Activated B cell treated with CpG ODN at 0.5 μM for 24 hours (primary cell): ENCODE measurements at regions of chr5 and their contacts with region 1.

Region 1: DNA sequence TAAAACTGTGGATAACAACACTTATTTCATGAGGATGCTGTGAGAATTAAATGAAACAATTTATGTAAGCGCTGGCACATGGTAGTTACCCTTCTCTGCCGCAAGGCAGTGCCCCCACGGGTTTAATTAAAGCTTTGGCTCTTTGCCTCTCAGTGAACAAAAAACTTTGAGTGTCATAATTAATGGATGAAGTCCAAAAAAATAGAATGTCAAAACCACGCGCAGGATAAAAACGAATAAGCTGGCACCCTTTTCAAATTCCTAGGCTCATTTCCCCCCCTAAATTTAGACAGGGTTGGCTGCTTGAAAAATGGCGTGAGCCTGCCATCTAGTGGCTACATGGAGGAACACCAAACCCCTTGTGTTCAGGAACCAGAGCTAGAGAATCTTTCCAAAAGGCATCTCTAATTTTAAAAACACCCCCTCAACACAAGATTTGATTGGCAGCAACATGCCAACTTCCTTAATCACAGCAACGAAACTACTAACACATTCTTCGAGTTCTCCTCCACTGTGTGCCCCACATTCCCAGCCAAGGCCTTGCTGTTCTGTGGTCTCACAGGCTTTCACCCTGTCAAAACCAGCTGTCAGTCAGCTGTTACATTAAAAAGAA is 29.0 kb upstream of the CCNG1 start:
- DNase-seq: no peak
- ATAC-seq: peak; percentile 88
- H3K4me3 Mint-ChIP-seq: no peak overlapping the region
- H3K27ac Mint-ChIP-seq: no peak overlapping the region
- H3K4me1 Mint-ChIP-seq: peaks cover 3% of the 10 kb centered on the region
- H3K27me3 Mint-ChIP-seq: peaks cover 9% of the 10 kb centered on the region
- CTCF ChIP-seq: peak; percentile 96

Region 2: DNA sequence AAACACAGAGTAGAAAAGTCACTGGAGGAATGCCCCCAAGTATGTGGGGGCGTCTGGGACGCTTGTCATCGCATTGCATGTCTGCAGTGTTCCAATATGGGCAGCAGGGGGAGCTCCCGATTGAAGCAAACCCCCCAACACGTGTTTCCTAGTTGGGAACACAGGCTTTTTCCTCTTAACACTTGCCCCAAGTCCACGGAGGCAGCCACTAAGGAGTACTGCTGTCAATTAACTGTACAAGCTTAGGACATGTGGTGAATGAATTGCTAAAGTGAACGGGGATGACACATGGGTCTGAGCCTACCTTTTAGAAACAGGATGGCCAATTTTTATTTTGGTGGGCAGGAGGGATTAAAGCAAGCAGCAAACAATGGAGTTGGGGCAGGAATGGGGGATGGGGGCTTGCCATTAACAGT is 1864.1 kb before region 1 on chr5:
- CTCF ChIA-PET with region 1: interaction called, 10 read pairs
- POLR2A ChIA-PET with region 1: no interaction called
- intact Hi-C with region 1: loop called (anchors 1 kb)
- DNase-seq: no peak
- ATAC-seq: no peak
- H3K4me3 Mint-ChIP-seq: no peak overlapping the region
- H3K27ac Mint-ChIP-seq: no peak overlapping the region
- H3K4me1 Mint-ChIP-seq: peaks cover 23% of the 10 kb centered on the region
- H3K27me3 Mint-ChIP-seq: peaks cover 38% of the 10 kb centered on the region
- CTCF ChIP-seq: no peak

Region 3: DNA sequence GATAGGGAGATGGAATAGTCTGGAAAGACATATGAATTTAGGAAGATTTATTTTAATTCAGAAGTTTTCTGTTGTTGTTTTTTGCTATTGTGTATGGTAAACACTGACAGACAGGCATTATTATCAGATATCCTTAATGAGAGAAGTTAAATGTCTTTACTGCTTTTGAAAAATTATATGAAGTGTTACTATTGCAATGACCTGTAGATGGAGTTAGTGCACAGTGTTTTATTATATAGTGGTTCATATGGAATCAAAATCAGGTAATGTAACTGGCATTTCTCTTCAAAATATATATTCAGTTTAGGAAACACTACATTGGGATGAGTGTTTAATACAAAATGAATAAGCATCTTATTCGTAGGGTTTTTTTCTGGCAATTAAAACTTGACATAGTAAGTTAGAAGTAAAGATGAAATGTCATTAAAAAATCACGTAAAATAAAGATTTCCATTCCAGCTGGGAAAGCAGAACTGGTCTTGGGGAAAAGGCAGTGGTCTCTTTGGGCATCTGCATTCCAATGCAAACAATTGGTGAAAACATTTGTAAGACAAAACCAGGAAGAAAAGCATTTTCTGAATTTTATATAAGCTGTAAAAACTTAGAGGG is 1556.6 kb before region 1 on chr5:
- CTCF ChIA-PET with region 1: no interaction called
- POLR2A ChIA-PET with region 1: no interaction called
- intact Hi-C with region 1: loop called (anchors 2 kb)
- DNase-seq: no peak
- ATAC-seq: no peak
- H3K4me3 Mint-ChIP-seq: no peak overlapping the region
- H3K27ac Mint-ChIP-seq: no peak overlapping the region
- H3K4me1 Mint-ChIP-seq: no peaks in the 10 kb centered on the region
- H3K27me3 Mint-ChIP-seq: peaks cover 16% of the 10 kb centered on the region
- CTCF ChIP-seq: no peak

Region 4: GRCh38 chr5:162209005-162209605 is 1199.3 kb before region 1 on chr5:
- CTCF ChIA-PET with region 1: no interaction called
- POLR2A ChIA-PET with region 1: no interaction called
- intact Hi-C with region 1: loop called (anchors 2 kb)
- DNase-seq: no peak
- ATAC-seq: no peak
- H3K4me3 Mint-ChIP-seq: no peak overlapping the region
- H3K27ac Mint-ChIP-seq: no peak overlapping the region
- H3K4me1 Mint-ChIP-seq: no peaks in the 10 kb centered on the region
- H3K27me3 Mint-ChIP-seq: no peaks in the 10 kb centered on the region
- CTCF ChIP-seq: no peak

Region 5: GRCh38 chr5:163306421-163306820 is 102.0 kb before region 1 on chr5:
- CTCF ChIA-PET with region 1: interaction called, 11 read pairs
- POLR2A ChIA-PET with region 1: no interaction called
- intact Hi-C with region 1: loop called (anchors 1 kb)
- DNase-seq: no peak
- ATAC-seq: no peak
- H3K4me3 Mint-ChIP-seq: no peak overlapping the region
- H3K27ac Mint-ChIP-seq: no peak overlapping the region
- H3K4me1 Mint-ChIP-seq: no peaks in the 10 kb centered on the region
- H3K27me3 Mint-ChIP-seq: no peaks in the 10 kb centered on the region
- CTCF ChIP-seq: no peak

Region 6: GRCh38 chr5:163347671-163348070 is 60.7 kb before region 1 on chr5:
- CTCF ChIA-PET with region 1: interaction called, 5 read pairs
- POLR2A ChIA-PET with region 1: no interaction called
- intact Hi-C with region 1: loop called (anchors 5 kb)
- DNase-seq: no peak
- ATAC-seq: no peak
- H3K4me3 Mint-ChIP-seq: no peak overlapping the region
- H3K27ac Mint-ChIP-seq: no peak overlapping the region
- H3K4me1 Mint-ChIP-seq: no peaks in the 10 kb centered on the region
- H3K27me3 Mint-ChIP-seq: peaks cover 11% of the 10 kb centered on the region
- CTCF ChIP-seq: peak; percentile 84